Heart right ventricle (tissue), 16 donors: ENCODE measurements at regions of chr1 and their contacts with region 1.

Region 1: GRCh38 chr1:147494998-147495580 is 46.2 kb upstream of the BCL9 start:
- DNase-seq: peak; percentile 51 to 79
- ATAC-seq: peak; percentile 84 to 96 (median 92)
- H3K4me3 ChIP-seq: no peak overlapping the region
- H3K27ac ChIP-seq: no peak overlapping the region
- H3K4me1 ChIP-seq: peaks cover 0 to 31% (median 19%) of the 10 kb centered on the region in 9 donors
- H3K27me3 ChIP-seq: no peaks in the 10 kb centered on the region
- CTCF ChIP-seq: peak; percentile 80 to 97 (median 93)

Region 2: GRCh38 chr1:147109041-147109440 is 386.0 kb before region 1 on chr1:
- intact Hi-C with region 1: no loop called
- DNase-seq: no peak
- ATAC-seq: no peak
- H3K4me3 ChIP-seq: no peak overlapping the region
- H3K27ac ChIP-seq: no peak overlapping the region
- H3K4me1 ChIP-seq: no peaks in the 10 kb centered on the region
- H3K27me3 ChIP-seq: peaks cover 0 to 27% (median 4%) of the 10 kb centered on the region in 7 donors
- CTCF ChIP-seq: no peak

Region 3: DNA sequence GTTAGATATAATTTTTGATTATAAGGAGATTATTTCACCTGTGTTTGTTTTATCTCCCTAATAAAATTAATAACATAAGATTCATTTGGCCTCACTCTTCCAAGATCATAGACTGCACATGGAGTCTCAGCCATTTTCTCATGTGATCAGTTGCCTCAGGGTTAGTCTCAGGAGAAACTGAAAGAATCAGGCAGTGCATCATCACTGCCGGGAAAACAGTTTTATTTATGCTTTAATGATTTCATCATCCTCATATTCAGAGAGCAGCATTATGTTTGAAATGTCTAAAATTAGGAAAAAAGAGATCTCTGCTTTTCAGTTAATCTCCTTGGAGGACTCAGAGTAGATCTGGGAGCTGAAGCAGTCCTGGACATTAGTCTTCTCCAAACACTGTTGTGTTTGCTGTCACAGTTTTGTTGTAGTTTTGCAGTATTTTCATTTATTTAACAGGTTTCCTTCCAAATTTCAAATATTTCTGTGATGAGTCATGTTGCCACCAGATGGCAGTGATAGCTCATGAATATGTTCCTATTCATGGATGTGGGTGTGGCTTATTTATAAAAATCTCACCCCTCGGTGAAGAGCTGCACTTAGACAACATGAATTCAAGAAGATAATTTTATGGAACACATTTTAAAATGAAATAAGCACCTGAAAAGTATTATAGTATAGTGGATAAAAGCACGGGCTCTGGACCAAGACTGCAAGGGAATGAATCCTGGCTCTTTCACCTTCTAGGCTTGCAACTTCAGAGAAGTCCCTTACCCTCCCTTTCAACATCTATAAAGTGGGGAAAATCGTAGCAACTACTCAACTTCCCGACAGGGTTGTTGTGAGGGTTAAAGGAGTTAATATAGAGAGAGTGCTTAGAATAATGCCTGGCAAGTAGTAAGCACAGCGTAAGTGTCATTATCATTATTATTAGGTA is 221.4 kb before region 1 on chr1:
- intact Hi-C with region 1: loop called in 2 of 10 experiments (anchors 10 kb)
- DNase-seq: peak in 1 of 2 donors; percentile 40
- ATAC-seq: peak in 7 of 8 donors; percentile 38 to 82 (median 70)
- H3K4me3 ChIP-seq: no peak overlapping the region
- H3K27ac ChIP-seq: peak overlapping the region in 4 of 10 donors; percentile 18 to 66 (median 40)
- H3K4me1 ChIP-seq: peaks cover 0 to 18% (median 5%) of the 10 kb centered on the region in 9 donors
- H3K27me3 ChIP-seq: no peaks in the 10 kb centered on the region
- CTCF ChIP-seq: peak; percentile 14 to 73 (median 63)

Region 4: GRCh38 chr1:147515046-147515869 is 20.2 kb after region 1 on chr1:
- intact Hi-C with region 1: no loop called
- DNase-seq: no peak
- ATAC-seq: peak in 7 of 8 donors; percentile 63 to 86 (median 78)
- H3K4me3 ChIP-seq: no peak overlapping the region
- H3K27ac ChIP-seq: peak overlapping the region in 8 of 10 donors; percentile 37 to 84 (median 61)
- H3K4me1 ChIP-seq: peaks cover 3 to 45% (median 27%) of the 10 kb centered on the region in 9 donors
- H3K27me3 ChIP-seq: no peaks in the 10 kb centered on the region
- CTCF ChIP-seq: peak in 6 of 9 donors; percentile 23 to 56 (median 44)

Region 5: GRCh38 chr1:147545133-147545532 is 50.0 kb after region 1 on chr1:
- intact Hi-C with region 1: loop called in 2 of 10 experiments (anchors 5 kb)
- DNase-seq: no peak
- ATAC-seq: no peak
- H3K4me3 ChIP-seq: no peak overlapping the region
- H3K27ac ChIP-seq: no peak overlapping the region
- H3K4me1 ChIP-seq: peaks cover 0 to 61% (median 17%) of the 10 kb centered on the region in 9 donors
- H3K27me3 ChIP-seq: peaks cover 0 to 18% (median 0%) of the 10 kb centered on the region in 7 donors
- CTCF ChIP-seq: no peak

Region 6: DNA sequence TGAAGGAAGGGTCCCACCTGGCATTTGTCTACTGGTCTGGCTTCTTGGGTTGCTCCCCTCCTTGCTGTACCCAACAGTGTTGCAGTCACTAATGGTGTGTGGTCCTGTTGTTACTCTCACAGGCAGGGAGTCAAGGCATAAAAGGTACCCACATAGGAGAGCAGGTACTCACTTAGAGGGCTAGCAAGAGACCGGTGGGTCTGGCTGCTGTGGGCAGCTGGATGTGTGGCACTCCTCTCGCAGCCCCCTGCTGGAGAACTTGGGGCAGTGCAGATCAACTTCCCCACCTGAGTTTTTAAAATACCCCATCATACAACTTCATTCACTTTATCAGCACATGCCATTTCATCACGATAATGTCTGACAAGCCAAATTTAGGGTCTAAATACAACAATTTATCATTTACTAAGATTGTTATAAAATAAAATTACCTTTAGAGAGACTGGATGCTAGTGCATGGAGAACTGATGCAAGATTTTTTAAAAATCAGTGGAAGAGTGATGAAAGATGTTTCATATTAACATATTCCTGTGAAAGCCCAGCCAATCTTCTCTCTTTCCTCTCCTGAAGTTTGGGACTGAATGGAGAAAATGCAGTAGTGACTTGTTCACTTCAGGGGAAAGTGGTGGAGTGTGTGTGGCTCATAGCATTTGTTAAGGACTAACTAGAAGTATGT is 132.5 kb after region 1 on chr1:
- intact Hi-C with region 1: loop called (anchors 1 to 5 kb)
- DNase-seq: peak; percentile 34 to 41
- ATAC-seq: peak; percentile 33 to 79 (median 72)
- H3K4me3 ChIP-seq: no peak overlapping the region
- H3K27ac ChIP-seq: no peak overlapping the region
- H3K4me1 ChIP-seq: peaks cover 0 to 34% (median 0%) of the 10 kb centered on the region in 9 donors
- H3K27me3 ChIP-seq: no peaks in the 10 kb centered on the region
- CTCF ChIP-seq: peak; percentile 87 to 95 (median 92)

Region 7: DNA sequence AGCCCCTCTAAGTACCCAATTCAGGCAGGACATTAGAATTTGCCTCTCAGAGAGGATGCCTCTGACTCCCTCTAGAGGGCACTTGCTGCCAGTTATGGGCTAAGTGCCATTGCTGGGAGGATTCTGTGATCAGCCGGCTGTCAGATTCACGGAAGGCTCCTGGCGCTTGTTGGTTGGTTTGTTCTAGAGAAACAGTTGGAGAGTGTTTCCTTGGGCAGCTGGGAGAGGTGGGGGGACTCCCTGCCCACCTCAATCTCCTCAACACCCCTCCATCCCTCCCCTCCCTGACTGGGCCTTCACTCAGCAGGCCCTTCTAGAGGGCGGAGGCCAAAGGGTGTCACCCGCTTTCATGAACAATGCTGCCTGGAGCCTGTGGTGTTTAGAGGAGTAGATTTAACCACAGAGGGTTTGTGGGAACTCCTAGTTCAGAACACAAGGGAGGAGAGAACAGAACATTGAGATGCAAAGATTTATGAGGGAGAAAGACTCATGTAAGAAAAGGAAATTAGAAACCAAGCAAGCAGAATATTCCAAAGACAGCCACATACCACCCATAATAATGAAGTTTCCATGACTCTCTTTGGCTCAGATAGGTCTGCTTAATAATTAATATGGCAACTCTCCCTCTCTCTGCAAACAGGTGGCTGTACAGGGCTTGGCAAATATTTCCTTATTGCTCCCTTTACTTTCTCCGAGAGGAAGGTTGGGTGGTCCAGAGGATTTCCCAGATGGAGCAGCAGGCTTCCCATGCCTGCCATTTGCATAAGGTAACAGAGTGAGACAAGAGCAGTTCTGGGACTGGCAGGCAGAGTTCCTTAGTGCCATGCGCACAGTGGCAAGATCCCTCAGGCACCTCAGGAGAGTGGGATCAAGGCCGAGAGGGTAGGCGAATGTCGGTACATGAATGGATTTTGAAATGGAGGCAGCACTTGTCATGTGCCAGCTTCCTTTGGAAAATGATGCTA is 205.2 kb after region 1 on chr1:
- intact Hi-C with region 1: loop called in 3 of 10 experiments (anchors 2 to 10 kb)
- DNase-seq: peak; percentile 32 to 62
- ATAC-seq: peak; percentile 52 to 90 (median 82)
- H3K4me3 ChIP-seq: no peak overlapping the region
- H3K27ac ChIP-seq: peak overlapping the region in 2 of 10 donors; percentile 17 to 23
- H3K4me1 ChIP-seq: peaks cover 0 to 7% (median 0%) of the 10 kb centered on the region in 9 donors
- H3K27me3 ChIP-seq: no peaks in the 10 kb centered on the region
- CTCF ChIP-seq: peak; percentile 65 to 88 (median 85)